Sigmoid colon (tissue), 7 donors: ENCODE measurements at regions of chr21 and their contacts with region 1.

Region 1: DNA sequence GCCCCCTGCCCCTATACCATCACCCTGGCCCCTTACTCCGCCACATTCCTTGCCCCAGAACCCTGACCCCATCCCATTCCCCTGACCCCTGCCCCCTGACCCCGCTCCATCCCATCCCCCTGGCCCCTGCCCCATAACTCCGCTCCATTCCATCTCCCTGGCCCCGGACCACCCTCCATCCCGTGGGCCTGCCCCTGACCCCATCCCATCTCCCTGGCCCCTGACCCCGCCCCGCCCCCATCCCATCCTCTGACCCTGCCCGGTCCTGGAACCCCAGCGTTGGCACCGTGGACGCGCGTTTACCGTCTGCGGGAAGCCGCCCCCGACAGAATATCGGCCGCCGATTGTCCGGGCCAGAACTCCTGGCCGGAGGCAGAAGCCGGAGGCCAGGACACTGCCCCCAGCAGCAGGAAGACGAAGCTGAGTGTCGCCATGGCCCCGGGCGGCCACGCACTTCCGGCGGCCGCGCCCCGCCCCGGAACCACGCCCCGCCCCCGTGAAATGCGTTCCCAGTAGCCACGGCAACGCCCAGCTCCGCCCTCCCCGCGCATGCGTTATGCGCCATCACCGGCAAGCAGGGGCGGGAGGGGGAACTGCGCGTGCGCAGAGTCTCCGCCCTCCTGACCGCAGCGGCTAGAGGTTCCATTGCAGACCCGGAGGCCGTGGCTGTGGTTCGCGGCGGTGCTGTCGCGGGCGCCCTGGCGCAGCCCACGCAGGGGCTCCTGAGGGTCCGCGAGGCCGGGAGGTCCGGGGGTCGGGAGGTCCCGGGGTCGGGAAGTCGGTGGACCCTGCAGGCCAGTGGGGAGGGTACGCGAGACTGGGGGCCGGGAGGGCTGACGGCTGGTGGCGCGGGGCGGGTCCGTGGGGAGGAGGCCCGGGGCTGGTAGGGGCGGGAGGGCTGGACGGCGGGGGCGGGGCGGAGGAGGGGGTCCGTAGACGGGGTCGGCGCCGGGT is at the start of gene POFUT2:
- DNase-seq: peak; percentile 99
- H3K4me3 ChIP-seq: peak within 1 kb of the TSS; percentile 68 to 96 (median 83)
- H3K27ac ChIP-seq: peak within 1 kb of the TSS; percentile 80 to 98 (median 96)
- H3K4me1 ChIP-seq: peaks cover 0 to 52% (median 39%) of the 10 kb centered on the region in 4 donors
- H3K27me3 ChIP-seq: no peaks in the 10 kb centered on the region
- CTCF ChIP-seq: no peak
- EP300 ChIP-seq: peak in 1 of 4 donors; percentile 46
- POLR2A ChIP-seq: peak; percentile 86 to 89
- total RNA-seq, gene POFUT2: 13.0 to 31.3 (median 20.9) TPM

Region 2: DNA sequence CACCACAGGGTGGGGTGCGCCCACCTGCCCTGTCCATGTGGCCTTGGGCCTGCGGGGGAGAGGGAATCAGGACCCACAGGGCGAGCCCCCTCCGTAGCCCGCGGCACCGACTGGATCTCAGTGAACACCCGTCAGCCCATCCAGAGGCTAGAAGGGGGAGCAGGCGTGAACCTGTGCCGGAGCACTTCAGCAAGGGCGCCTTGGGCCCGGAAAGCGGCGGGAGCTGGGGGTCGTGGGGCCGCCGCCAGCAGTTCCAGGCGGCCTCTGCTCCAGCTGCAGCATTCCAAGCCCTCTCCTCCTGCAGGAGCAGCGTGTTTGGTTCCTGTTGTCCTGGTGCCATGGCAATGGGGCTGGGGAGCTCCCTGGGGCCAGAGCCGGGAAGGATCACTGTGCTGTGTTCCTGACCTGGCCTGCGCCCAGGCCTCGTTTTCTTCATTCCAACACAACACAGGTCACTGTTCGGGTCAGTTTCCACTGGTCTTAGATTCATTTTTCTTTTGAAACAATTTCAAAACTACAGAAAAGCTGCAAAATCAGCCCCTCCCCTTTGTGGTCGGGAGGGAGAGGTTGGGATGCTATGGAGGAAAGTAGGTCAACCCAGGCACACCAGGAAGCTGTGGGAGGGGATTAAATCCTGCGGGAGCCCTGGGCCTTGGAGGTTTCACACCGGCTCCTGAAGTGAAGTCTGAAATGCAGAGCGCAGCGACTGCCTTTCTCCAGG is 329.1 kb before region 1 on chr21:
- intact Hi-C with region 1: loop called (anchors 10 kb)
- DNase-seq: peak; percentile 92
- H3K4me3 ChIP-seq: peak overlapping the region in 3 of 4 donors; percentile 9 to 27 (median 26)
- H3K27ac ChIP-seq: peak overlapping the region; percentile 79 to 91 (median 86)
- H3K4me1 ChIP-seq: peaks cover 0 to 77% (median 65%) of the 10 kb centered on the region in 4 donors
- H3K27me3 ChIP-seq: no peaks in the 10 kb centered on the region
- CTCF ChIP-seq: no peak
- EP300 ChIP-seq: peak in 1 of 4 donors; percentile 35
- POLR2A ChIP-seq: no peak

Region 3: DNA sequence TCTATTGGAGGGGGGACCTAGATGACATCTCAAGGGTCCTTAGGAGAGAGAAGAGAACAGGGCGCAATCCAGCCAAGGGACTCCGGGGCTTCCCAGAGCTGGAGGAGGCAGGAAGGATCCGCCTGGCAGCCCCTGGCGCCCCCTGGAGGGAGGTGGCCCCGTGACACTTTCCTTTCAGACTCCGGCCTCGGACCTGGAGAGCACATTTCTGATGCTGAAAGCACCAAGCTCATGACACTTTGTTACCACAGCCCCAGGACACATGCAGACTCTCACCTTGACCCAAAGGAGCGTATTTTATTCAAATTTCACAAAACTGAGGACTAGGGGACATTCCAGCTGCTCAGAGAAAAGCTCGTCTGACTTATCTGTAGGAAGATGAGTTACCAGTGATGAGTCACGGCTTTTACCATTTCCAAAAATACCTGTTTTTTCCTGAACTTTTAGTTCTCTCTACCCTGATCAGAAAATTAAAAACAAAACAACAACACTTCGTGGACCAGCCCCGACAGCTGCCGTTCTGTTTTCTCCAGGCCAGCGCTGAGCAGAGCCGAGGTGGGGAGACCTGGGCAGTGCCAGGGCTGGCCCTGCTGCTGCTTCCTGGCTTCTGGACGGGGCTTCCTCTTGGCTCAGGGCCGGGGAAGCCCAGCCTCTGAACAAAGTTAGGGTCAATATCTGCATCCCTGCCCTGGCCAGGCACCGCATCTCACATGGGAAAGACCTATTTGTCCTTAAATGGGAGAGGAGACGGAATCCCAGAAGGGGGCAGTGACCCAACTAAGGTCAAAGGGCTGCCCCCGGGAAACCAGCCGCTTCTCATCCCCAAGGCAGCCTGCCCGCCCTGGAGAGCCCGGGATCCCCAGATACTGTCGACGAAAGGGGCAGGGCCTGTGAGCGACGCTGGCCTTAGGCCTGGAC is 21.6 kb after region 1 on chr21:
- intact Hi-C with region 1: loop called (anchors 2 kb)
- DNase-seq: peak; percentile 89
- H3K4me3 ChIP-seq: no peak overlapping the region
- H3K27ac ChIP-seq: peak overlapping the region; percentile 72 to 79 (median 76)
- H3K4me1 ChIP-seq: peaks cover 0 to 44% (median 32%) of the 10 kb centered on the region in 4 donors
- H3K27me3 ChIP-seq: no peaks in the 10 kb centered on the region
- CTCF ChIP-seq: peak in 3 of 4 experiments; percentile 57 to 65 (median 59)
- EP300 ChIP-seq: no peak
- POLR2A ChIP-seq: no peak

Region 4: GRCh38 chr21:45366931-45367401 is 79.3 kb after region 1 on chr21:
- intact Hi-C with region 1: loop called (anchors 2 kb)
- DNase-seq: peak; percentile 91
- H3K4me3 ChIP-seq: no peak overlapping the region
- H3K27ac ChIP-seq: peak overlapping the region; percentile 1 to 89 (median 24)
- H3K4me1 ChIP-seq: peaks cover 0 to 34% (median 29%) of the 10 kb centered on the region in 4 donors
- H3K27me3 ChIP-seq: no peaks in the 10 kb centered on the region
- CTCF ChIP-seq: no peak
- EP300 ChIP-seq: no peak
- POLR2A ChIP-seq: no peak

Region 5: GRCh38 chr21:45439161-45439872 is 151.6 kb after region 1 on chr21:
- intact Hi-C with region 1: loop called (anchors 1 kb)
- DNase-seq: peak; percentile 93
- H3K4me3 ChIP-seq: peak overlapping the region; percentile 11 to 45 (median 36)
- H3K27ac ChIP-seq: peak overlapping the region; percentile 66 to 80 (median 77)
- H3K4me1 ChIP-seq: peaks cover 0 to 24% (median 14%) of the 10 kb centered on the region in 4 donors
- H3K27me3 ChIP-seq: no peaks in the 10 kb centered on the region
- CTCF ChIP-seq: peak; percentile 96 to 98 (median 98)
- EP300 ChIP-seq: peak in 1 of 4 donors; percentile 52
- POLR2A ChIP-seq: no peak

Region 6: GRCh38 chr21:45542242-45542666 is 254.5 kb after region 1 on chr21 and contains the start of gene SLC19A1:
- intact Hi-C with region 1: loop called (anchors 10 kb)
- DNase-seq: peak; percentile 77
- H3K4me3 ChIP-seq: peak within 1 kb of the TSS; percentile 54 to 89 (median 74)
- H3K27ac ChIP-seq: peak within 1 kb of the TSS; percentile 59 to 80 (median 74)
- H3K4me1 ChIP-seq: peaks cover 0 to 25% (median 19%) of the 10 kb centered on the region in 4 donors
- H3K27me3 ChIP-seq: no peaks in the 10 kb centered on the region
- CTCF ChIP-seq: peak in 1 of 4 experiments; percentile 55
- EP300 ChIP-seq: no peak
- POLR2A ChIP-seq: no peak
- total RNA-seq, gene SLC19A1: 2.1 to 6.4 (median 2.5) TPM

Region 7: GRCh38 chr21:45820171-45821091 is 532.7 kb after region 1 on chr21:
- intact Hi-C with region 1: loop called (anchors 10 kb)
- DNase-seq: peak; percentile 89
- H3K4me3 ChIP-seq: no peak overlapping the region
- H3K27ac ChIP-seq: no peak overlapping the region
- H3K4me1 ChIP-seq: peaks cover 0 to 15% (median 5%) of the 10 kb centered on the region in 4 donors
- H3K27me3 ChIP-seq: peaks cover 0 to 4% (median 0%) of the 10 kb centered on the region in 3 donors
- CTCF ChIP-seq: peak; percentile 76 to 94 (median 84)
- EP300 ChIP-seq: no peak
- POLR2A ChIP-seq: no peak